Endothelial cell of umbilical vein (primary cell): ENCODE measurements at regions of chrX and their contacts with region 1.

Region 1: DNA sequence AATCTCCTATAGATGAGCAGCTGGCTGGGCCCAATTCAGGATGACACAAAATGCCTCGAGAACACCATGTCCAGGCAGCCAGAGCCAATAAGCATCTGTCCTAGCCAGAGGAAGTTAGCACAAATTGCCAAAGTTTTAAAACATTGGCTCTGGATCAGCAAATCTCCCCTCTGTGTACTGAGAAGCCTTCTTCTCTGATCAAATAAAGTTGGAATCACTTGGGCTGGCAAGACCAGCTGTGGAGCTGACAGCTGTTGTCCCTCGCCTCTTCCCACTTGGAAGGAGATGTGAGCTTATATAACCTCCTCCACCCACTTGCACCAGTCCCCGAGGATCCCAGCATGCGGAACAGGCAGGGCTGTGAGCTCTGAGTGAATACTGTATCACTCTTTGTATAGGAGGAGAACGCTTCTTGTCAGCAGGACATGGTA is 183.9 kb downstream of the OPHN1 start:
- DNase-seq: no peak
- H3K4me3 ChIP-seq: no peak overlapping the region
- H3K27ac ChIP-seq: no peak overlapping the region
- H3K4me1 ChIP-seq: peaks cover 20% of the 10 kb centered on the region
- H3K27me3 ChIP-seq: no peaks in the 10 kb centered on the region
- CTCF ChIP-seq: no peak
- POLR2A ChIP-seq: no peak

Region 2: DNA sequence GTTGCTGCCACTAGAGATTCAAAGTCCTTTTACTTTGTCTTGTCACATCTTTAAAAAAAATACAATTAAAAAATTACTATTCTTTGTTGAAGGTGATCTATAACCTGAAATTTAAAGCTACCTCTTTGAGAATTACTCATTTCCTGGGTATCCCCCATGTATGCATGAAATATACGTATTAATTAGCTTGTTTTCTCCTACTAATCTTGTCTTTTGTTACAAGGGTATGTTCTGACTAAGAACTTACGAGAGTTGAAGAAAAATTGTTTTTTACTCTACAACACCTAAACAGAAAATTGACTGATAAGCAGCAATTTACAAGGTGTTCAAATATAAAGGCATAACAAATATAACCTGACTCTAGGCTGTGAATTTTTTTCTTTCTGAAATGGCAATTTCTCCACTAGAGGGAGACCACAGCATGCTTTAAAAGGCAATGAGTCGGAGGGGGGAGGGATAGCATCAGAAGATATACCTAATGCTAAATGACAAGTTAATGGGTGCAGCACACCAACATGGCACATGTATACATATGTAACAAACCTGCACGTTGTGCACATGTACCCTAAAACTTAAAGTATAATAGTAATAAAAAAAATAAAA is 65.7 kb before region 1 on chrX:
- CTCF ChIA-PET with region 1: no interaction called
- POLR2A ChIA-PET with region 1: no interaction called
- dilution Hi-C with region 1: no loop called
- intact Hi-C with region 1: no loop called
- DNase-seq: peak; percentile 44
- H3K4me3 ChIP-seq: no peak overlapping the region
- H3K27ac ChIP-seq: no peak overlapping the region
- H3K4me1 ChIP-seq: peaks cover 12% of the 10 kb centered on the region
- H3K27me3 ChIP-seq: no peaks in the 10 kb centered on the region
- CTCF ChIP-seq: peak; percentile 18 to 25
- POLR2A ChIP-seq: no peak

Region 3: GRCh38 chrX:68232206-68232605 is 17.2 kb before region 1 on chrX:
- CTCF ChIA-PET with region 1: no interaction called
- POLR2A ChIA-PET with region 1: no interaction called
- dilution Hi-C with region 1: no loop called
- intact Hi-C with region 1: loop called (anchors 1 kb)
- DNase-seq: no peak
- H3K4me3 ChIP-seq: no peak overlapping the region
- H3K27ac ChIP-seq: no peak overlapping the region
- H3K4me1 ChIP-seq: no peaks in the 10 kb centered on the region
- H3K27me3 ChIP-seq: no peaks in the 10 kb centered on the region
- CTCF ChIP-seq: no peak
- POLR2A ChIP-seq: no peak